ENCODE measurements at regions of chr10 and their contacts with region 1.

Region 1: GRCh38 chr10:69800109-69800508 is 1.6 kb upstream of the COL13A1 start:
- DNase-seq: no peak
- H3K4me3 ChIP-seq: no peak overlapping the region
- H3K27me3 ChIP-seq: no peaks in the 10 kb centered on the region
- CTCF ChIP-seq: peak; percentile 86

Region 2: GRCh38 chr10:69716711-69717560 is 83.2 kb before region 1 on chr10:
- CTCF ChIA-PET with region 1: interaction called, 12 read pairs
- POLR2A ChIA-PET with region 1: interaction called, 8 read pairs
- DNase-seq: no peak
- H3K4me3 ChIP-seq: no peak overlapping the region
- H3K27me3 ChIP-seq: no peaks in the 10 kb centered on the region
- CTCF ChIP-seq: peak; percentile 86

Region 3: GRCh38 chr10:69742928-69743602 is 57.0 kb before region 1 on chr10:
- CTCF ChIA-PET with region 1: interaction called, 19 read pairs
- POLR2A ChIA-PET with region 1: no interaction called
- DNase-seq: no peak
- H3K4me3 ChIP-seq: no peak overlapping the region
- H3K27me3 ChIP-seq: peaks cover 7% of the 10 kb centered on the region; the same call in 1 of the 2 replicates
- CTCF ChIP-seq: peak; percentile 66

Region 4: DNA sequence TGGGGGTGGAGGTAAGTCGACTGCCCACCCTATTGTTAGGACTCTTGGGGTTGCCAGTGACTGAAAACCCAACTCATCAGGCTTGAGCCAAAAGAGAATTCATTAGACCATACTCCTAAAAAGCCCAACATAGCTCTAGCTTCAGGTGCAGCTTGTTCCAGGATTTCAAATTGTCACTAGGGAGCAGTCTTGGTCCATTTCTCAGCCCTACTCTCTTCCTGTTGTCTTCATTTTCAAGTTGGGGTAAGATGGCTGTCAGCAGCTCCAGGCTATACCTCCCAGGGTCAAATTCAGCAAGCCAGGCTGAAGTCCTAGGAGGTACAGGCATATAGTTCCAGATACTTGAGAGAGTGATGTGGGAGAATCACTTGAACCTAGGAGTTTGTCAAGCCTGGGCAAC is 13.3 kb before region 1 on chr10:
- CTCF ChIA-PET with region 1: interaction called, 133 read pairs
- POLR2A ChIA-PET with region 1: no interaction called
- DNase-seq: no peak
- H3K4me3 ChIP-seq: no peak overlapping the region
- H3K27me3 ChIP-seq: peaks cover 11% of the 10 kb centered on the region
- CTCF ChIP-seq: peak; percentile 54

Region 5: DNA sequence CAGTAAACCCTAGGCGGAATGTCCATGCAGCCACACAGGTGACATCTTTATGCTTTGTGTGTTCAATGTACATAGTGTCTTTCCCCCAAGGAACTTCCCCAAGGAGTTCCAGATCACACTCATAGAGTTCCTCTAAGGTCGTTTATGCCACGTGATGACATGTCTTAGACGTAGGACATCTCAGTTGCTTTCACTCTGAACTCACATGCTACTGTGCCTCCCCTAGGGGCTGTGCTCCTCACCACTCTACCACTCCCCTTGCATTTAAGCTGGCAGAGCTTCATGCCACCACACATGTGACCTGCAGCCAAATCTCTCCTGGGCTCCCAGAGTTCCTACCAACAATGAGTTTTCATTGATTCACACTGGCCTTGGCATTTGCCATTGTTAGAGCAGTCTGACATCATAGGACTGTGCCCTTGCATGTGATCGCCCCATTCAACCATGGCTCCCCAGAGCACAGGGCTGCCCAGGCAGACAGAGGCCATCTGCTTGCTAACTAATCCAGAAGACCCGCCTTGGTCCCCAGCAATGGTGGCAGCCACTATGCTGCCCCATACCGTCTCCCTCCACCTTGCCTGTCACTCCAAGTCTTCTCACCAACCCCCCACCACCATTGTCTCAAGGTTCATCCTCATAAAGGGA is 157.3 kb after region 1 on chr10:
- CTCF ChIA-PET with region 1: no interaction called
- POLR2A ChIA-PET with region 1: no interaction called
- DNase-seq: no peak
- H3K4me3 ChIP-seq: no peak overlapping the region
- H3K27me3 ChIP-seq: no peaks in the 10 kb centered on the region
- CTCF ChIP-seq: no peak

Region 6: DNA sequence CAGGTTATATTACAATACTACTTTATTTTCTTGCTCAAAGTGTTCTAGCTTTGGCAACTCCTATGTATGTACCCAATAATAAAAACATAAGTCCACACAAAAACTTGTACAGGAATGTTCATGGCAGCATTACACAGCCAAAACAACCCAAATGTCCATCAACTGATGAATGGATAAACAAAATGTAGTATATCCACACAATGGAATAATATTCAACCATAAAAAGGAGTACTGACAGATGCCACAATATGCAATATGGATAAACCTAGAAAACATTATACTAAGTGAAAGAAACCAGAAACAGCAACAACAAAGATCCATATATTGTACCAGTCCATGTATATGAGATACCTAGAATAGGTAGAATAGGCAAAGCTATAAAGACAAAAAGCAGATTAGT is 412.2 kb after region 1 on chr10:
- CTCF ChIA-PET with region 1: no interaction called
- POLR2A ChIA-PET with region 1: no interaction called
- DNase-seq: no peak
- H3K4me3 ChIP-seq: no peak overlapping the region
- H3K27me3 ChIP-seq: no peaks in the 10 kb centered on the region
- CTCF ChIP-seq: no peak

Measured in BJ (cell line).